ENCODE measurements at regions of chr1 and their contacts with region 1.

Region 1: DNA sequence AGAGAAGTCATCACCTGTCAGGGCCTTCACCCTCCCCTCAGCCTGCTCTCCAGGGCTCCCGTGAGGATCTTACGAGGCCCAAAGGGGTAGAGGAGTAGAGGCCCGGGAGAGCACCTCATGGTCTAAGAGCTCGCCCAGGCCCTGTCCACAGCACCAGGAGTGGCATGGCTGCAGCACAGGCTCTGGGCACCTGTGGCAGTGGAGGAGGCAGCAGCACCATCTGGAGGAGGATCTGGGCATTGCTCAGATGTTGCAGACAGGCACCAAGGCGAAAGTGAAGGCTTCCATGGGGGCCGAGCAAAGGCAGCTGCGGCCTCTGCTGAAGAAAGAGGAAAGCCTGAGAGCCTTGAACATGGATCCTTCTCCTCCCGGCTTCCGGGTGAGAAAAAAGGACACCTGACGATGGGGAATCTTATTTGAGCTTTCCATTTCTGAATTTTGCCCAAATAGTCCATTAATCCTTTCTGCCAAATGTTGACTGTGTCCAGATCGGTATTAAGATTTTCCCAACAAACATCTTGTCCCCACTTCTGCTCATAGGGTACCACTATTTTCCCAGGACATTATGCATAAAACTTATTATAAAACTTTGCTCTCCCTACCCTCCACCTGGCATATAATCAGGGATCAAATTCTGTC is 604.7 kb downstream of the PTPRC start:
- DNase-seq: peak; percentile 86
- H3K4me3 Mint-ChIP-seq: no peak overlapping the region
- H3K27ac Mint-ChIP-seq: no peak overlapping the region
- H3K4me1 Mint-ChIP-seq: no peaks in the 10 kb centered on the region
- H3K27me3 Mint-ChIP-seq: peaks cover 9% of the 10 kb centered on the region

Region 2: GRCh38 chr1:198829944-198830343 is 413.6 kb before region 1 on chr1:
- CTCF ChIA-PET with region 1: no interaction called
- intact Hi-C with region 1: loop called (anchors 2 kb)
- DNase-seq: peak; percentile 23
- H3K4me3 Mint-ChIP-seq: no peak overlapping the region
- H3K27ac Mint-ChIP-seq: no peak overlapping the region
- H3K4me1 Mint-ChIP-seq: no peaks in the 10 kb centered on the region
- H3K27me3 Mint-ChIP-seq: no peaks in the 10 kb centered on the region

Region 3: GRCh38 chr1:198880818-198881597 is 362.5 kb before region 1 on chr1:
- CTCF ChIA-PET with region 1: interaction called, 4 read pairs
- intact Hi-C with region 1: loop called (anchors 2 kb)
- DNase-seq: peak; percentile 40
- H3K4me3 Mint-ChIP-seq: no peak overlapping the region
- H3K27ac Mint-ChIP-seq: peak overlapping the region; percentile 32
- H3K4me1 Mint-ChIP-seq: peaks cover 33% of the 10 kb centered on the region
- H3K27me3 Mint-ChIP-seq: no peaks in the 10 kb centered on the region

Region 4: DNA sequence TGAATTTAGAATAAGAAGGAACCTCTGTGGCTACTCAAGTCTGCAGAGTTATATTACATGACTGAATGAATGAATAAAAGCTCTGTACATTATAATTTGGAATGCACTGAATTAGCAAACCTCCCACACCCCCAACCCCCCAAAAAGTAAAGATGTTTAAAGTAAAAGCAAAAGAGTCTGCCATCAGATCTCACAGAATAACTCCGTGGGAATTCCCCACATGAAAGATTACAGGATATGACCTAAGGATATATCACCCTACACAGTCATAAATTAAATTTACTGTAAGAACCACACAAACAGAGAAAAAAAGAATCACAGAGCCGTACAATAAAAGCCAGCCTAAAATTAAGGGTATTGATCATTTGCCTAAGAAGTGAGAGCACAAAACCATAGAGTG is 17.4 kb before region 1 on chr1:
- CTCF ChIA-PET with region 1: interaction called, 12 read pairs
- intact Hi-C with region 1: no loop called
- DNase-seq: peak; percentile 66
- H3K4me3 Mint-ChIP-seq: peak overlapping the region; percentile 46
- H3K27ac Mint-ChIP-seq: peak overlapping the region; percentile 27
- H3K4me1 Mint-ChIP-seq: peaks cover 23% of the 10 kb centered on the region
- H3K27me3 Mint-ChIP-seq: no peaks in the 10 kb centered on the region

Measured in activated naive CD4-positive, alpha-beta T cell treated with anti-CD3 and anti-CD28 coated beads for 36 hours (primary cell).